Left lung (tissue), 14 donors: ENCODE measurements at regions of chr9 and their contacts with region 1.

Region 1: DNA sequence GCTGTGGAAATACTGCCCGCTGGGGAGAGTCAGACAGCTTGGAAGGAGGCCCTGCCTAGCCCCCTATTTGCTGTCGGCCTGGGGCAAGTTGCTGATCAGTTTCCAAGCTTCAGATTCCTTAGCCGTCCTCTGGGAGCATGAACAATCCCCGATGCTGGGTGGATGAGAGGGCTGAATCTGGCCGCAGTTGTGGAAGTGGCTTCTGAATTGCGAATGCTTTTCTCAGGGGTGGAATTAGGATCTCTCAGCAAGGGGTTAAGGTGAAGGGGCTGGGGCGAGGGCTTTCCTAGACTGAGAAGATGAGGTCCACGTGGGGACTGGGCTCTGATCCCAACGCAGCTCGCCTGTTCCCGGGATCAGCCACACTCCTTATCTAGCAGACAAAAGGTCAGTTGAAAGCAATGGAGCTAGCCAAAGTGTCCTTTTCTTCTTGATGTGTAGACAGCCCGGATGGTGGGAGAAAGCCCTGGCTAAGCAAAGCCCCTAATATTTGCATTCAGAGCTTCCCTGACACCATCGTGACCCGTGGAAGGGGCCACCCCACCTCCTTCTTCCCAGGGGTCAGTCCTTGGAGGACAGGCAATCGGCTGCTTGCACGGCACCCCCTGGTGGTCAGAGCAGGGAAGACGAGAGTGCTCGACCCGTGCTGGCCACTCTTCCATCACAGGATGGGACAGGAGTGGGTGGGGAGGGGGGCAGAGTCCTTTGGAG is 54.9 kb downstream of the COL15A1 start:
- DNase-seq: peak; percentile 48 to 93 (median 70)
- ATAC-seq: peak; percentile 87
- H3K4me3 ChIP-seq: no peak overlapping the region
- H3K27ac ChIP-seq: peak overlapping the region in 1 of 2 donors; percentile 46
- H3K4me1 ChIP-seq: peaks cover 25 to 27% of the 10 kb centered on the region in 2 donors
- H3K27me3 ChIP-seq: peaks cover 0 to 16% of the 10 kb centered on the region in 2 donors
- CTCF ChIP-seq: peak; percentile 83

Region 2: DNA sequence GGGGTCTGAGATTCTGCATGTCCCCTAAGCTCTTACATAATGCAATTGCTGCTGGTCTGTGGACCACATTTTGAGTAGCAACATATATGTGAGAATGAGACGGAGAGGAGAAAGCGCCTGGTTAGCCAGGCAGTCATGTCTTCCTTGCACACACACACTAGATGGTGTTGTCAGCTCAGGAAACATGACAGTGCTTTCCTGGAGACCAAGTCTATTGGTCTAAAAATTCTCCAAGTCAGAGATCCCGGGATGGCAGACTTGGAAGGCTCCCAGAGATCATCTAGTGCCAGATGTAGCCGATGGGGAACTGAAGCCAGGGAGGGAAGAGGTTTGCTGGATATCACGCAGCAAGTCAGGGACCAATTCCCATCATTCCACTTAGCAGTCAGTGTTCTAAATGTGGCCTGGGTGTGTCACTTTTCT is 137.7 kb before region 1 on chr9:
- intact Hi-C with region 1: loop called in 1 of 2 experiments (anchors 5 kb)
- DNase-seq: peak in 2 of 4 donors; percentile 46 to 71
- ATAC-seq: peak; percentile 66
- H3K4me3 ChIP-seq: no peak overlapping the region
- H3K27ac ChIP-seq: no peak overlapping the region
- H3K4me1 ChIP-seq: peaks cover 7% of the 10 kb centered on the region in 2 donors
- H3K27me3 ChIP-seq: no peaks in the 10 kb centered on the region
- CTCF ChIP-seq: peak in 1 of 2 donors; percentile 31

Region 3: GRCh38 chr9:99130069-99130468 is 131.5 kb after region 1 on chr9:
- intact Hi-C with region 1: loop called in 1 of 2 experiments (anchors 10 kb)
- DNase-seq: no peak
- ATAC-seq: no peak
- H3K4me3 ChIP-seq: no peak overlapping the region
- H3K27ac ChIP-seq: no peak overlapping the region
- H3K4me1 ChIP-seq: peaks cover 0 to 28% of the 10 kb centered on the region in 2 donors
- H3K27me3 ChIP-seq: no peaks in the 10 kb centered on the region
- CTCF ChIP-seq: no peak